ENCODE measurements at regions of chr2 and their contacts with region 1.

Region 1: DNA sequence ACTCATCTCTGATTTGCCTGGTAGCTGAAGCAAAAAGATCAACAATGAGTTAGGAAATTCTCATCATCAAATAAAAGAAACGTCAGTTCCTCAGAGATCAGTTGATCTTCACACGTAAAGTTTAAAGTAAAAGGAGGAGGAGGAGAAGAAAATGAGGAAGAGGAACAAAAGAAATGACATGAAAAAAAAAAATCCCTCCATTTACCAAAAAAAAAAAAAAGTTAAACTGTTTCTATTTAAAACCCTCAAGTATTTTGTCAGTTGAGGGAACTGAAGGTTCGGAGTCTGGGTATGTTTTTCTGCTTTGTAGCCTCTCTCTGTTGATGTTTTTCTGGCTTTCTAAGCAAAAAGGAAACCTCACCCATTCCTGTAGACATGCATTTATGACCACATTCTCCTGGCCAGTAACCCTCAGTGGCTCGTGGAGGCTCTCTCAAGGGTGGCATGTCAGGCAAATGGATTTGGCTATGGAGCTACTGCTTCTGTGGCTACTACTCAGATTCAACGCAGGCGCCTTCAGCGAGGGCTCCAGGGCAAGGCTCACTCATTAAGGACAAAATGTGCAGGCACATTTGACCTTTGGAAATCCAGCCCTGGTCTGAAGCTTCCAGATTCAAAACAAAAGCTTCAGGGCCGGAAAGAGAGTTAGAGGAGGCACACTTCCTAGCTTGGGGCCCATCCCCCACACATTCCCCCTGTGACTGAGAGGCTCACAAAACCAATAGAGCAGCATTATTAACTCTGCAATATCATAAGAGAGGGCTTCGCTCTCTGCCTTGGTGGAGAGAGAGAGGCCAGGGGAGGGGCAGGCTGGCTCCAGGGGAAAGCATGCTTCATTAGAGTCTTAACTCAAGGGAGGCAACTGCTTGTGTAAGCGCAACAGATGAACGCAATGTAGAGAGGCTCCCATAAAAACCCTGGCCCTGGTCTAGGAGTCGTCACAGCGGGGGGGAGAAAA is 22.3 kb downstream of the KLF7 start:
- DNase-seq: peak; percentile 66
- ATAC-seq: peak; percentile 62
- H3K4me3 Mint-ChIP-seq: peak overlapping the region; percentile 72
- H3K27ac Mint-ChIP-seq: peak overlapping the region; percentile 83
- H3K4me1 Mint-ChIP-seq: peaks cover 50% of the 10 kb centered on the region
- H3K27me3 Mint-ChIP-seq: no peaks in the 10 kb centered on the region
- CTCF ChIP-seq: no peak

Region 2: GRCh38 chr2:206423149-206423548 is 720.3 kb before region 1 on chr2:
- CTCF ChIA-PET with region 1: no interaction called
- POLR2A ChIA-PET with region 1: no interaction called
- intact Hi-C with region 1: no loop called
- DNase-seq: no peak
- ATAC-seq: no peak
- H3K4me3 Mint-ChIP-seq: no peak overlapping the region
- H3K27ac Mint-ChIP-seq: no peak overlapping the region
- H3K4me1 Mint-ChIP-seq: no peaks in the 10 kb centered on the region
- H3K27me3 Mint-ChIP-seq: peaks cover 4% of the 10 kb centered on the region
- CTCF ChIP-seq: no peak

Region 3: DNA sequence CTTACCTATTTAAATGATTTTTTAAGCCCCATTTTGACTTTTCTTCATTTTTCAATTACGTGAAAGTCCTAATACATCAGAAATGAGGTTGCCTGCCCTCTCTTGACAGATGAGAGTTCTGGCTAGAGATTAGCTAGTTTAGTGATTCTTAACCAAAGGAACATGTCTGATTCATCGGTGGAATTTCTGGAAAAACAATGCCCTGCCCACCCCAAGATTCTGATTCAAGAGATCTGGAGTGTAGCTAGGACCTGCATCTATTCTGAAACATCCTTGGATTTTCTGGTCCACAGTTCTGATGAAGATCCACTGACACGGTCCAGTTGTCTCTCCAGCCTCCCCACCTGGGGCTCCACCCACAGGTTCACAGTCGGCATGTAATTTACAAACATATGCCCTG is 89.0 kb before region 1 on chr2:
- CTCF ChIA-PET with region 1: no interaction called
- POLR2A ChIA-PET with region 1: no interaction called
- intact Hi-C with region 1: no loop called
- DNase-seq: no peak
- ATAC-seq: no peak
- H3K4me3 Mint-ChIP-seq: no peak overlapping the region
- H3K27ac Mint-ChIP-seq: no peak overlapping the region
- H3K4me1 Mint-ChIP-seq: no peaks in the 10 kb centered on the region
- H3K27me3 Mint-ChIP-seq: no peaks in the 10 kb centered on the region
- CTCF ChIP-seq: no peak

Region 4: DNA sequence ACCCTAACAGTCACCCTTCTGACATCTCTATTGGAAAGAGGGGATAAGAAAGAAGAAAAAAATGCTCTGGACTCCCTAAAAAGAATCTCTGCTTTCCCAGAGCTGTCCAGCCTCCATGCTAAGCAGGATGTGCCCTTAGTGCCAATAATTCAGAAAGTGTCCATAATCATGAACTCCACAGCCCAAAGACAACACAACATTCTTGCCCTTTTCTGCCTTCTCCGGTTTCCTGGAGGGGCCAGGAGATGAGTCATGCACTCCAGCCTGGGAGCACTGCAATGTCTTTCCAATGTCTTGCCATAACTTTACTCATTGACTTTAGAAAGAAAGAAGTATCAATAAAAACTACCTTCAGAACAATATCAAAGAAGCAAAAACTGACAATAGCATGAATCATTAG is 21.7 kb before region 1 on chr2:
- CTCF ChIA-PET with region 1: interaction called, 23 read pairs
- POLR2A ChIA-PET with region 1: interaction called, 17 read pairs
- intact Hi-C with region 1: no loop called
- DNase-seq: no peak
- ATAC-seq: no peak
- H3K4me3 Mint-ChIP-seq: no peak overlapping the region
- H3K27ac Mint-ChIP-seq: no peak overlapping the region
- H3K4me1 Mint-ChIP-seq: peaks cover 58% of the 10 kb centered on the region
- H3K27me3 Mint-ChIP-seq: no peaks in the 10 kb centered on the region
- CTCF ChIP-seq: no peak

Region 5: DNA sequence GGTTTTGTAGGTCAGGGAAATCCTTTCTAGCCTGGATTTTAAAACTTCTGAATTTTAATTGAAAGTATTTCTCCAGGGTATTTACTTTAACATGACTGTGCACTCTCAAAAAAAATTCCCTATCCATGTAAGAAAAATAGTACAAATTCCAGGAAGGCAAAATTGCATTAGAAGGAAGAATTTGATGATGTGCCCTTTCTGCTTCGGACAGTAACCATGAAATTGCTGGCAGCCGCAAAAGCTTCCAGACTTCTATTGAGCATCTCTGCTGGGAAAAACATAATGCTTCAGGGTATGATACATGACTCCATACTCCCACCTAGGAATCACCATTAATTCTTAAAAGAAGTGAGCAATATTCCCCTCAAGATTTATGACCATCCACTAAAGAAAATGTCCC is 39.4 kb after region 1 on chr2:
- CTCF ChIA-PET with region 1: no interaction called
- POLR2A ChIA-PET with region 1: no interaction called
- intact Hi-C with region 1: no loop called
- DNase-seq: no peak
- ATAC-seq: no peak
- H3K4me3 Mint-ChIP-seq: no peak overlapping the region
- H3K27ac Mint-ChIP-seq: no peak overlapping the region
- H3K4me1 Mint-ChIP-seq: peaks cover 3% of the 10 kb centered on the region
- H3K27me3 Mint-ChIP-seq: no peaks in the 10 kb centered on the region
- CTCF ChIP-seq: no peak

Region 6: DNA sequence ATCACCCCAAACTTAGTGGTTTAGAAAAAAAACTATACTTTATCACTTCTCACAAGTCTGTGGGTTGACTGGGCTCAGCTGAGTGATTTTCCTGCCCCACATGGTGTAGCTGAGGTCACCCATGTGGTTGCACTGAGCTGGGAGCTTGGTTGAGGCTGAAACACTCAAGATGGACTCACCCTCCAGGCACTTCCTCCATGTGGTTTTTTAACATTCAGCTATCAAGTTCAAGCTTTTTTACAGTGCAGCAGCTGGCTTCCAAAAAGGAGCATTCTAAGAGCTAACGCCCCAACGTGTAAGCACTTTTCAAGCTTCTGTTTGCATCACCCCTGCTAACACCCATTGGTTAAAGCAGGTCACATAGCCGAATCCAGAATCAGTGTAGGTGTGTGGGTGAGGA is 280.4 kb after region 1 on chr2:
- CTCF ChIA-PET with region 1: no interaction called
- POLR2A ChIA-PET with region 1: no interaction called
- intact Hi-C with region 1: no loop called
- DNase-seq: peak; percentile 61
- ATAC-seq: peak; percentile 86
- H3K4me3 Mint-ChIP-seq: no peak overlapping the region
- H3K27ac Mint-ChIP-seq: no peak overlapping the region
- H3K4me1 Mint-ChIP-seq: peaks cover 6% of the 10 kb centered on the region
- H3K27me3 Mint-ChIP-seq: peaks cover 2% of the 10 kb centered on the region
- CTCF ChIP-seq: no peak